GM12878 (cell line): ENCODE measurements at regions of chr5 and their contacts with region 1.

Region 1: GRCh38 chr5:148374692-148375360 is 8.9 kb upstream of the FBXO38 start:
- DNase-seq: no peak
- ATAC-seq: peak; percentile 90
- H3K4me3 ChIP-seq: no peak overlapping the region
- H3K27ac ChIP-seq: no peak overlapping the region
- H3K4me1 ChIP-seq: no peaks in the 10 kb centered on the region
- H3K27me3 ChIP-seq: no peaks in the 10 kb centered on the region
- CTCF ChIP-seq: peak; percentile 68 to 76 (median 75)
- EP300 ChIP-seq: no peak
- POLR2A ChIP-seq: no peak
- RAD21 ChIP-seq: peak; percentile 74

Region 2: DNA sequence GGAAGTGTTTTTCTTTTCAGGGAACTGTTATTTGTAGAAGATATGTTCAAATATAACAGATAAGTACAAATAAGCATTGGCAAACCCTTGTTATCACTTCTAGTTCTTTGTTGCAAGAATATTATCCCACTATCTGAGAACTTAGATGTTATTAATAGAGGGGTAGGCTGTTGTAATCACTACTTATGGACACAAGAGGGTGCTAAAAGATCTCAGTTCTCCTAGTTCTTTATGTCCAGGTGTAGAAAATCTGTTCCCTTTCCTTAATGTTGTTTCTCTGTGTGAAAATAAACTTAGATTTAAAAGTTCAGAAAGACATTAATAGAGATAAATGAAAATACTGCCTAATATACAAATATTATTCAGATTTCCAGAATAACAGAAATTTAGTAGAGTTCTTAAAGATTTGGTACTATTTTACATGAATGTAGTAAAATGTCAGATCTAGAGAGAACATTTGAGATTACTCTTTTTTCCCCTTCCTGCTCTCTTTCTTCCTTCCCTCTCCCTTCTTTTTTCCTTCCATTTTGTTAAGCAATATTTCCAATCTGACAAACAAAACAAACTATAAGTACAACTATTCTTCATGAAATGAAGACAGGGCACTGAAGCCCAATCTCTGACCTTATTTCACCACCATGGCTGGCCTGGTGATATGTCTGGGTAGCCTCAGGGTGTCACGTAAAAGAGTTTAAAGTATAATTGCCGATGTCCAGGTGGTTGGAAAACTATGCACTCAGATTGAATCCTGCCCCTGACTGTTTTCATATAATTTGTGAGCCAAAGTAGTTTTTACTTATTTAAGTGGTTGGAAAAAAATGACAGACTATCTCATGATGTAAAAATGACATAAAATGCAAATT is 424.9 kb before region 1 on chr5:
- CTCF ChIA-PET with region 1: interaction called, 4 read pairs
- POLR2A ChIA-PET with region 1: no interaction called
- RAD21 ChIA-PET with region 1: interaction called, 3 read pairs
- SMC1A ChIA-PET with region 1: interaction called, 6 read pairs
- in situ Hi-C with region 1: no loop called
- intact Hi-C with region 1: loop called (anchors 1 kb)
- DNase-seq: no peak
- ATAC-seq: peak; percentile 77
- H3K4me3 ChIP-seq: no peak overlapping the region
- H3K27ac ChIP-seq: no peak overlapping the region
- H3K4me1 ChIP-seq: no peaks in the 10 kb centered on the region
- H3K27me3 ChIP-seq: no peaks in the 10 kb centered on the region
- CTCF ChIP-seq: peak; percentile 48 to 66 (median 48); a peak in 4 of 6 replicates
- EP300 ChIP-seq: no peak
- POLR2A ChIP-seq: no peak
- RAD21 ChIP-seq: peak; percentile 68

Region 3: GRCh38 chr5:148179234-148179824 is 195.5 kb before region 1 on chr5:
- CTCF ChIA-PET with region 1: interaction called, 40 read pairs
- POLR2A ChIA-PET with region 1: no interaction called
- RAD21 ChIA-PET with region 1: interaction called, 13 read pairs
- SMC1A ChIA-PET with region 1: interaction called, 7 read pairs
- in situ Hi-C with region 1: loop called (anchors 10 kb)
- intact Hi-C with region 1: loop called (anchors 1 kb)
- DNase-seq: peak; percentile 4
- ATAC-seq: peak; percentile 77
- H3K4me3 ChIP-seq: no peak overlapping the region
- H3K27ac ChIP-seq: no peak overlapping the region
- H3K4me1 ChIP-seq: no peaks in the 10 kb centered on the region
- H3K27me3 ChIP-seq: no peaks in the 10 kb centered on the region
- CTCF ChIP-seq: peak; percentile 57 to 75 (median 61); a peak in 5 of 6 replicates
- EP300 ChIP-seq: no peak
- POLR2A ChIP-seq: no peak
- RAD21 ChIP-seq: peak; percentile 87

Region 4: GRCh38 chr5:148186248-148186996 is 188.4 kb before region 1 on chr5:
- CTCF ChIA-PET with region 1: interaction called, 40 read pairs
- POLR2A ChIA-PET with region 1: no interaction called
- RAD21 ChIA-PET with region 1: no interaction called
- SMC1A ChIA-PET with region 1: interaction called, 7 read pairs
- in situ Hi-C with region 1: loop called (anchors 10 kb)
- intact Hi-C with region 1: no loop called
- DNase-seq: no peak
- ATAC-seq: peak; percentile 81
- H3K4me3 ChIP-seq: no peak overlapping the region
- H3K27ac ChIP-seq: no peak overlapping the region
- H3K4me1 ChIP-seq: no peaks in the 10 kb centered on the region
- H3K27me3 ChIP-seq: no peaks in the 10 kb centered on the region
- CTCF ChIP-seq: no peak
- EP300 ChIP-seq: no peak
- POLR2A ChIP-seq: no peak
- RAD21 ChIP-seq: no peak

Region 5: DNA sequence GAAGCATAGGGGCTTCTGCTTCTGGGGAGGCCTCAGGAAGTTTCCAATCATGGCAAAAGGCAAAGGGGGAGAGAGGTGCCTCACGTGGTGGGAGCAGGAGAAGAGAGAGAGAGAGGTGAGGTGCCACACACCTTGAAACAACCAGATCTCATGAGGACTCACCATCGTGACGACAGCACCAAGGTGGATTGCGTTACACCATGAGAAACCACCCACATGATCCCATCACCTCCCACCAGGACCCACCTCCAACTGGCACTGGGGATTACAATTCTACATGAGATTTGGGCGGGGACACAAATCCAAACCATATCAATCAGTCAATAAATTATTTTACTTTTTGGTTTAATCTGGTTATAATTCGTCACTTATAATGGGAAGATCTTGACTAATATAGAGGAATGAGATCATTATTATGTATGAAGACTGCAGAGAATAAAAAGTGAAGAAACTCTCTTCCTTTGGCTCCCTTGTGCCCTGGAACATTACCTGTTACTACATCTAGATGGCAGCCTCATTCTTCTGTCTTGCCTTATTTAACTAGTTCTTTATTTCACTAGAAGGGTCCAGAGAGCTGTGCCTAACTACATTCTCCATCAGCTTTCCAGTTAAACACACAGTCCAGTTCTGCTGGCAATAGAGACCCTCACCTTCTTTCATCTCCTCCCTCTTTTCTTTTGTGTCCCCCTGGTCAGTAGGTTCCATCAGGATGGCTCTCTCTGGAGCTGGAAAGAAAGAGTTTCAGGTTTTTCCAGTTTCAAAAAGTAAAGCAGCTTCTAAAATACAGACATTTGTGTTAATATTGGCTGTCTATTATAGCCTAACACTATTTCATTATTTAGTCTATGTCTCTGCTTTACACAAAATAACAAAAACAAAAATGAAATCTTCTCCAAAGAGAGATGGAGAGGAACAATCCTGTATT is 84.3 kb before region 1 on chr5:
- CTCF ChIA-PET with region 1: interaction called, 4 read pairs
- POLR2A ChIA-PET with region 1: no interaction called
- RAD21 ChIA-PET with region 1: no interaction called
- SMC1A ChIA-PET with region 1: no interaction called
- in situ Hi-C with region 1: no loop called
- intact Hi-C with region 1: loop called (anchors 5 kb)
- DNase-seq: no peak
- ATAC-seq: peak; percentile 57; the same call in 2 of the 3 replicates
- H3K4me3 ChIP-seq: no peak overlapping the region
- H3K27ac ChIP-seq: no peak overlapping the region
- H3K4me1 ChIP-seq: no peaks in the 10 kb centered on the region
- H3K27me3 ChIP-seq: no peaks in the 10 kb centered on the region
- CTCF ChIP-seq: peak; percentile 15 to 36 (median 28); a peak in 4 of 6 replicates
- EP300 ChIP-seq: no peak
- POLR2A ChIP-seq: no peak
- RAD21 ChIP-seq: peak; percentile 32; the same call in 1 of the 2 replicates

Region 6: GRCh38 chr5:148443998-148444397 is 69.2 kb after region 1 on chr5:
- CTCF ChIA-PET with region 1: no interaction called
- POLR2A ChIA-PET with region 1: no interaction called
- RAD21 ChIA-PET with region 1: no interaction called
- SMC1A ChIA-PET with region 1: no interaction called
- in situ Hi-C with region 1: no loop called
- intact Hi-C with region 1: no loop called
- DNase-seq: peak; percentile 3
- ATAC-seq: peak; percentile 96
- H3K4me3 ChIP-seq: no peak overlapping the region
- H3K27ac ChIP-seq: no peak overlapping the region
- H3K4me1 ChIP-seq: no peaks in the 10 kb centered on the region
- H3K27me3 ChIP-seq: no peaks in the 10 kb centered on the region
- CTCF ChIP-seq: peak; percentile 63 to 73 (median 69)
- EP300 ChIP-seq: no peak
- POLR2A ChIP-seq: no peak
- RAD21 ChIP-seq: peak; percentile 78